Activated CD4-positive, alpha-beta T cell treated with anti-CD3 and anti-CD28 coated beads for 36 hours (primary cell): ENCODE measurements at regions of chr1 and their contacts with region 1.

Region 1: DNA sequence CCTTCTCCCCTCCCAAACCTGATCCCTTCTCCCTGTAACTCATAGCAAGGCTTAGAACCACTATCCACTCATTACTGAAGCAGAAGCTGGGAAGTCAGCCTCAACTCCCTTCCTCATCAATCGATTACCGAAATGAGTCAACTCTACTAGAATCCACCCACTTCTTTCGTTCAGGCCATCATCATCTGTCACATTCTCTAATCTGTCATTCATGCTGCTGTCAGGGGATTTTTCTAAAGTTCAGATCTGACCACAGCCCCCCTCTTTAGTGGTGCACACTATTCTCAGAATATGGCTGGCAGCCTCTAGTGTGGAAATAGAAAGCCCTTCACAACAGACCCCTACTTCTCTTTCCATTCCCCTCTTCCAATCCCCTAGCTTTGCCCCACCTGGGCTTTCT is 5.1 kb downstream of the NT5C1A start:
- DNase-seq: peak; percentile 64
- ATAC-seq: peak; percentile 86
- H3K4me3 Mint-ChIP-seq: peak overlapping the region; percentile 20
- H3K27ac Mint-ChIP-seq: peak overlapping the region; percentile 77
- H3K4me1 Mint-ChIP-seq: peaks cover 20% of the 10 kb centered on the region
- H3K27me3 Mint-ChIP-seq: peaks cover 26% of the 10 kb centered on the region

Region 2: DNA sequence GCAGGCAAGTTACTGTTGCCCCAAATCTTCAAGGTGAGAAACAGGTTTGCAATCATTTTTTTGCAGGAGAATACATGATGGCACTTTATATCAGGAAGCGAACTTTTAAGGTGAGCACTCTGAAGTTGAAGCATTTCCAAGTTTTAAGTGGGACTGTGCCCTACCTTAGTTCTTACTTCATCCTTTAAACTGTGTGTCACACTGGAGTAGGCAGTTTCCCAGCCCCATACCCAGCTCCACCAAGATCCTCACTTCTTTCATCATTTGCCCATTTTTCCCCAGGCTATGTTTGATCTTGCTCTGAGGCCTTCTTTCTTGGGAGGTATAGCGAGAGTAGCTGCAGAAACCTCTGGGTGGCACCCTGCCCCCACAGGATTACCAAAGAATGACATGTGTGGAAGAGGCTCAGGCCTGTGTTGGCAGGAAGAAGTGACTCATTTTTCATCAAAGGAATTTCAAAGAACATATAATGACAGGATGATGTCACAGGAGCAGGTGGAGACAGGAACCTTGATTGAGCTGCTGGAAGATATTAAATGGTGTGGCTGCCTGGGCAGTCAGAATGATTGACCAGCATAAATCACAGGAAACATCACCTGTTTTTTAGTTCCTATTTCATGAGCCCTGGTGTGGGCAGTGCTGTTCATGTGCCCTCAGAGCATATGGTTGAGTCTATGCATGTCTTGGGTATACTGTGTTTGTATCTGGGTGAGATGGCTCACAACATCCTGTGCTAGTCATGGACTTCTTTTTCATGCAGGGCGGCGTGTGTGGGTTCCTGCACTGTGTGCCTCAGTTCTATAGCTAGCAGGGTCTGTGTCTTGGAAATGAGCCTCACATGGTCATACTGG is 483.0 kb before region 1 on chr1:
- CTCF ChIA-PET with region 1: no interaction called
- POLR2A ChIA-PET with region 1: no interaction called
- intact Hi-C with region 1: loop called in 1 of 2 experiments (anchors 2 kb)
- DNase-seq: peak; percentile 90
- ATAC-seq: peak; percentile 84
- H3K4me3 Mint-ChIP-seq: peak overlapping the region; percentile 30
- H3K27ac Mint-ChIP-seq: peak overlapping the region; percentile 98
- H3K4me1 Mint-ChIP-seq: peaks cover 50% of the 10 kb centered on the region
- H3K27me3 Mint-ChIP-seq: no peaks in the 10 kb centered on the region

Region 3: DNA sequence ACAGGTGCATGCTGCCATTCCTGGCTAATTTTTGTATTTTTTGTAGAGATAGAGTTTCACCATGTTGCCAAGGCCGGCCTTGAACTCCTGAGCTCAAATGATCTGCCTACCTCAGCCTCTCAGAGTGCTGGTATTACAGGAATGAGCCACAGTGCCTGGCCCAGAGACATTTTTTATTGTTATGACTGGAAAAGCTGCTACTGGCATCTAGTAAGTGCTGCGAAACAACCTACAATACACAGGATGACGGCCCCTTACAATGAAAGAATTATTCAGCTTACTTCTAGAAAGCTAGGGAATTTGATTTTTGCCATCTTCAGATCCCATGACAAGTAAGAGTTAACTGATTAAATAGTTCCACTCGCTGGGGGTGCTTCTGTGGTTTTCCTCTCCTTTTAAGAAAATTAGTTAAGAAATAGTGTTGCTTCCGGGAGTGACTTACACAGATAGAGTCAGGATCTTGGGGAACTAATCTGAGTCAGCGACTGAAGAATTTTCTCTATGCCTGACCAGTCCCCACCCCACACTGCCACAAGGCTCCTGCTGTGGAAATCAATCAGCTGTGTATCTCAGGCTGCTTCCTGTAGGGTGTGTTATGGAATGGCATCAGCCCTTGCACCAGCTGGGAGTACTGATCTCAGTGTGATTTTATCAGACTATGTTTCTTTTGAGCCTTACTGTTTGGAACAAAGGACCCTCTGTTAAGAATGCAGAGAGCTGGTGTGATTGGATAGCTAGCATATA is 268.3 kb before region 1 on chr1:
- CTCF ChIA-PET with region 1: no interaction called
- POLR2A ChIA-PET with region 1: no interaction called
- intact Hi-C with region 1: loop called in 1 of 2 experiments (anchors 1 kb)
- DNase-seq: peak; percentile 58
- ATAC-seq: peak; percentile 82
- H3K4me3 Mint-ChIP-seq: peak overlapping the region; percentile 34
- H3K27ac Mint-ChIP-seq: peak overlapping the region; percentile 82
- H3K4me1 Mint-ChIP-seq: peaks cover 60% of the 10 kb centered on the region
- H3K27me3 Mint-ChIP-seq: no peaks in the 10 kb centered on the region

Region 4: DNA sequence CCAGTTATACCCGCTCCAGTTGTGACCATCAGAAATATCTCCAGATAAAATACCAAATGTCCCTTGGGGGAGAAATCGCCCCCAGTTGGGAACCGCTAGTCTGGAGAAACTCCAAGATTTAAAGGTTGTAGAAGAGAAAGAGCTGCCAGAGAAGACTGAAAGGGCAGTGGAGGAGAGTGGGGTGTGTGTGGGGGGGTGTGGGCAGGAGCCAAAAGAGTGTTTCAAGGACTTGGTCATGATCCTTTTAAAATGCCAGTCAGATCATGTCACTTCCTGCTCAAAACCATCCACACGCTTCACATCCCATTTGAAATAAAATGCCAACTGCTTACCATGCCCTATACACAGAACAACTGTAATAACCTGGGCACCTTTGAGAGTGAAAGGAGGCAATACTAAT is 24.0 kb before region 1 on chr1:
- CTCF ChIA-PET with region 1: no interaction called
- POLR2A ChIA-PET with region 1: no interaction called
- intact Hi-C with region 1: no loop called
- DNase-seq: no peak
- ATAC-seq: no peak
- H3K4me3 Mint-ChIP-seq: no peak overlapping the region
- H3K27ac Mint-ChIP-seq: no peak overlapping the region
- H3K4me1 Mint-ChIP-seq: peaks cover 3% of the 10 kb centered on the region
- H3K27me3 Mint-ChIP-seq: peaks cover 16% of the 10 kb centered on the region

Region 5: DNA sequence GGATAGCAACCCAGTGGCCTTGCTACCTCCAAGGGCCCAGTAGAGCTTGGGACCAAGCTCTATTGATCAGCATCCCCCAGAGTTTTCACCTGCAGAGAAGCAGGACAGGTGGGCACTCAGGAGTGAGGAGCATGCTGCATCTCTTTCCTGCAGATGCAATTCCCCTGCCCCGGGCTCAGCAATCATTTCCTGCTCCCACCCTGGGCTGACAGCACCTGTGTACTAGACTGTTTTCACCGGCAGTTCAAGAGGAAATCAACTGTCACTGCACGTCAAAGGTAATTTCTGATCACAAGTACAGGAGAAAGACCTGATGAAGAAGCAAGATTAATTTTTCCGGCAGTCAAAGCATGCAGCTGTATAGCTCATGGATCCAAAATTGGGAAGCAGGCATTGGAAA is 14.0 kb after region 1 on chr1:
- CTCF ChIA-PET with region 1: interaction called, 17 read pairs
- POLR2A ChIA-PET with region 1: interaction called, 3 read pairs
- intact Hi-C with region 1: no loop called
- DNase-seq: no peak
- ATAC-seq: no peak
- H3K4me3 Mint-ChIP-seq: no peak overlapping the region
- H3K27ac Mint-ChIP-seq: no peak overlapping the region
- H3K4me1 Mint-ChIP-seq: peaks cover 22% of the 10 kb centered on the region
- H3K27me3 Mint-ChIP-seq: peaks cover 18% of the 10 kb centered on the region

Region 6: DNA sequence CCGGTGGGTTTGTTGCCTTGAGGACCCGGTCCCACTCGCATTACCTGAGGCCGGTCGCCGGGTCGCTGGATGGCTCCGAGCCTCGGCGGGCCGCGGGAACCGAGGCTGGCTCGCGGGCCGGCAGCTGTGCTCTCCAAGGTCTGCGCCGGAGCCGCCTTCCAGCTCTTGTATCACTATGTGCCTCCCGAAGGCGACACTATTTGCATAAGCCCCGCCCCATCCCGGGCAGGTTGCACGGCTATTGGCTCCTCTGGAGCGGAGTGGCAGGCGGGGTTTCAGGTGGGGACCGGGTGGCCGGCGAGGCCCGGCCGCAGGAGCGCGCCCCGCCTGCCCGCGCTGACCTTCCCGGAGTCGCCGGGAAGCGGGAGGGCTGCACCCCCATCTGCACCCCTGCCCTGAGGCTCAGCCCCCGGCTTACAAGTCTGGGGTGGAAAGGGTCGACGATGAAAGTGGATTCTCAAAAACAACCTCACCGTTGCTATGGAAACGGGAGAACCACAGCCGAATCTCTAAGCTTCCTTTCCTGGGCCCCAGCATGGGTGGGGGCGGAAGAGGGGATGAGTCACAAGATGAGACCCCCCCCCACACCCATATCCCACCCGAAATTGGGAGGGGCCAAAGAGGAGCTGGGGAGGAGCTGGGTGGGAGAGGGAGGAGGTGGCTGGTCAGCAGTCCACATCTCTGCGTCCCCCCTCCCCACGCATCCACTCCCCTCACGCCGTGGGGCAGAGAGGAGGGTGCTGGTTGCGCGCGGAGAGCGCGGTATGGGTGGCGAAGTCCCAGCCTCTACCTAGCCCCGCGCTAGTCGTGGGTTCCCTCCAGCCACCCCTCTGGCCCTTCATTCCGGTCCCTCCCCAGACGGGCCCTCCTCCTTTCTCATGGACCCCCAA is 24.7 kb after region 1 on chr1 and contains the start of gene HPCAL4:
- CTCF ChIA-PET with region 1: interaction called, 4 read pairs
- POLR2A ChIA-PET with region 1: interaction called, 4 read pairs
- intact Hi-C with region 1: loop called (anchors 1 to 2 kb)
- DNase-seq: peak; percentile 91
- ATAC-seq: peak; percentile 94
- H3K4me3 Mint-ChIP-seq: peak within 1 kb of the TSS; percentile 68
- H3K27ac Mint-ChIP-seq: no peak within 1 kb of the TSS
- H3K4me1 Mint-ChIP-seq: peaks cover 36% of the 10 kb centered on the region
- H3K27me3 Mint-ChIP-seq: peaks cover 17% of the 10 kb centered on the region
- total RNA-seq, gene HPCAL4: 0.94 to 1.1 TPM

Region 7: DNA sequence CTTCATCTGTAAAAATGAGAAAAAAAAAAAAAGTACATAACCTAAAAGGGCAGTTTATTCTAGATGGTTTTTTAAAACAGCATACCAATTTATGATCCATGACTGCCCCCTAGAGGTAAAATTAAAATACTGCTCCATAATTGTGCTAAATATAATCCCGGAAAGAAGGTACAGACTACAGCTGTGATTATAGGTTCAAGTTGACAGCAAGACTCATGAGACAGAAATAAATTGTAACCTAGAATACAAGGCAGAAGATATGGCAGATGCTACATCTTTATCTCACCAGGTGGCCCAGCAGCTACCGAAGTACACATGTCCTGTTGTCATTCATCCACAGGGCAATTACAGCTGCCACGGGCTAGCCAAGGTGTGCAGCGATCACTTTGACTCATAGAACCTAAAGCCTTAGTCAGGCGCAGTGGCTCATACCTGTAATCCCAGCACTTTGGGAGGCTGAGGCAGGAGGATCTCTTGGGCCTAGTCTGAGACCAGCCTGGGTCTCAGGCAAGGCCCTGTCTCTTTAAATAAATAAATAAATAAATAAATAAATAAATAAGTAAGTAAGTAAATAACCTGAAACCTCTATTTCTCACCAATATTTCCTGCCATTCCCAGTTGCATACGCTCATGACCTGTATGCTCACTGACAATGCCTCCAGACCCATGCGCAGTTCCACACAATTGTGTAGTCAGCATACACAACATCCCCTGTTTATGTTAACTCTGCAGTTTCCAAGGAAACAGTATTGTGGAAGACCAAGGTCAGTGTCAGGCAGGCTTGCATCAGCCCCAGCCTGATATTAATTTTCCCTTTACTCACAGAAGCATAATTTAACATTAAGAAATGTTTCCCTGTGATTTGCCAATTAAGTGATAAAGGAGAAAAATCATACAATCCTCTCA is 53.6 kb after region 1 on chr1:
- CTCF ChIA-PET with region 1: interaction called, 5 read pairs
- POLR2A ChIA-PET with region 1: no interaction called
- intact Hi-C with region 1: loop called in 1 of 2 experiments (anchors 5 kb)
- DNase-seq: no peak
- ATAC-seq: peak; percentile 73
- H3K4me3 Mint-ChIP-seq: no peak overlapping the region
- H3K27ac Mint-ChIP-seq: no peak overlapping the region
- H3K4me1 Mint-ChIP-seq: no peaks in the 10 kb centered on the region
- H3K27me3 Mint-ChIP-seq: peaks cover 38% of the 10 kb centered on the region

Region 8: DNA sequence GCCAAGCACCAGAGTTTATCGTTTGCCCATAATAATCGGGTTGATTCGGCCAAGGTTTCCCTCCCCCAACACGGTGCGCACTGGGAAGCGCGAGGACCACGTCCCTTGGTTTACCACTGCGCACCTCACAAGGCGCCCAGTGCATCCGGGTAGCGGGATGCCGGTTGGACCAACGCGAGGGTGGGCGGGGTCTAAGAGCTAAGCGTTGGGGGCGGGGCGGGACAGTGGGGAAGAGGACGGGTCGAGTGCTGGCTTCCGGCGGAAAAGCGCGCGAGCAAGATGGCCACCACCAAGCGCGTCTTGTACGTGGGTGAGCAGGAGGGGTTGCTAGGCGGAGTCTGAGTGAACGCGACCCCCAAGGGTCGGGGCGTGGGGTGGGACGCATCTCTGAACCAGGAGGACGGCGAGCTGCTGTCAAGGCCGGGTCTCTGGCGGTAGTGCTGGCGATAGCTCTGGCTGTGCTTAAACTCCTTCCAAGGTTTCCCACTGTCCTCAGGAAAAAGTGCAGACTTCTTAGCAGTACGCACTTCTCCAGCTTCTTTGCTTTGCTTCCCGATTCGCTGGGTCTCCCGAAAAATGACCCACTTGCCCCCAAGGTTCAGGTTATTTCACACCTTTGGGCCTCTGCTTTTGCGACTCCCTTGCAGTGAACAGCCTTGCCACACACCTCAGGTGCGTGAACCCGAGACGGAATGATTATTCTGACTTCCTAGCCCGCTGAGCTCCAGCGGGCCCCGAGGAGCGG is 72.0 kb after region 1 on chr1 and contains the start of gene PPIE:
- CTCF ChIA-PET with region 1: interaction called, 3 read pairs
- POLR2A ChIA-PET with region 1: no interaction called
- intact Hi-C with region 1: loop called in 1 of 2 experiments (anchors 5 kb)
- DNase-seq: peak; percentile 99
- ATAC-seq: peak; percentile 98
- H3K4me3 Mint-ChIP-seq: peak within 1 kb of the TSS; percentile 96
- H3K27ac Mint-ChIP-seq: peak within 1 kb of the TSS; percentile 94
- H3K4me1 Mint-ChIP-seq: peaks cover 36% of the 10 kb centered on the region
- H3K27me3 Mint-ChIP-seq: peaks cover 7% of the 10 kb centered on the region
- total RNA-seq, gene PPIE: 55.3 to 70.4 TPM